MCF 10A (cell line): ENCODE measurements at regions of chr9 and their contacts with region 1.

Region 1: GRCh38 chr9:107732781-107733522 is 243.4 kb upstream of the KLF4 start:
- DNase-seq: peak; percentile 90
- H3K4me3 Mint-ChIP-seq: peak overlapping the region; percentile 65
- H3K27ac Mint-ChIP-seq: peak overlapping the region; percentile 88
- H3K4me1 Mint-ChIP-seq: peaks cover 58% of the 10 kb centered on the region
- H3K27me3 Mint-ChIP-seq: no peaks in the 10 kb centered on the region
- CTCF ChIP-seq: no peak

Region 2: DNA sequence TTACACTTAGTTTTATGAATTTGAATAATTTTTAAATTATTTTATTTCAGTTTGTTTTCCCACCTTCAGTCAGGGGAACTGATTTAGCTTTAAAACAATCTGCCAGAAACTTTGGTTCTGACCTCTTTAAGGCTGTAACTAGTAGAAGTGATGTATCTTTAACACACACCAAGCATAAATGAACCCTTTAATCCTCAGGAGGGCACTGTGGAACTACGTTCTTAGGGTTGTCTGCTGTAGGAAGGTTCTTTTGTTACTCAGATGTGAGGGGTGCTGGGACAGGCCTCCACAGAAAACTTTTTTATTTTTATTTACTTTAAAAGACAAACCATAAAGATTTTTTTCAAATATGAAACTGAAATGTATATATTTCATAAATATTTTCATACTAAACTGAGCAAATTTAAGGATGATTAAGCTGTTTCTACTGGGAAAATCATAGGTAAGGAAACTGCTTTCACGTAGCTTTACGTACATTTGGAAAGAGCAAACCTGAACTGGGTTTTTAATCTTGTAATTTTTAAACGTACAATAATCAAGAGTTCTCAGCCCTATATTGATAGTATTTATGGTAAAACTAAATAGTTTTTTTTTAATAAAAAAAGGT is 248.7 kb before region 1 on chr9:
- CTCF ChIA-PET with region 1: interaction called, 7 read pairs
- POLR2A ChIA-PET with region 1: interaction called, 49 read pairs
- intact Hi-C with region 1: loop called (anchors 1 kb)
- DNase-seq: peak; percentile 81
- H3K4me3 Mint-ChIP-seq: no peak overlapping the region
- H3K27ac Mint-ChIP-seq: no peak overlapping the region
- H3K4me1 Mint-ChIP-seq: peaks cover 31% of the 10 kb centered on the region
- H3K27me3 Mint-ChIP-seq: no peaks in the 10 kb centered on the region
- CTCF ChIP-seq: peak; percentile 55

Region 3: GRCh38 chr9:107711540-107711939 is 21.4 kb before region 1 on chr9:
- CTCF ChIA-PET with region 1: interaction called, 12 read pairs
- POLR2A ChIA-PET with region 1: interaction called, 34 read pairs
- intact Hi-C with region 1: loop called (anchors 2 kb)
- DNase-seq: peak; percentile 98
- H3K4me3 Mint-ChIP-seq: no peak overlapping the region
- H3K27ac Mint-ChIP-seq: peak overlapping the region; percentile 86
- H3K4me1 Mint-ChIP-seq: peaks cover 43% of the 10 kb centered on the region
- H3K27me3 Mint-ChIP-seq: no peaks in the 10 kb centered on the region
- CTCF ChIP-seq: no peak

Region 4: GRCh38 chr9:107749787-107750444 is 17.0 kb after region 1 on chr9:
- CTCF ChIA-PET with region 1: interaction called, 12 read pairs
- POLR2A ChIA-PET with region 1: interaction called, 77 read pairs
- intact Hi-C with region 1: loop called (anchors 1 kb)
- DNase-seq: peak; percentile 98
- H3K4me3 Mint-ChIP-seq: no peak overlapping the region
- H3K27ac Mint-ChIP-seq: peak overlapping the region; percentile 43
- H3K4me1 Mint-ChIP-seq: peaks cover 38% of the 10 kb centered on the region
- H3K27me3 Mint-ChIP-seq: no peaks in the 10 kb centered on the region
- CTCF ChIP-seq: no peak

Region 5: GRCh38 chr9:107949058-107949457 is 216.1 kb after region 1 on chr9:
- CTCF ChIA-PET with region 1: no interaction called
- POLR2A ChIA-PET with region 1: no interaction called
- intact Hi-C with region 1: no loop called
- DNase-seq: peak; percentile 33
- H3K4me3 Mint-ChIP-seq: no peak overlapping the region
- H3K27ac Mint-ChIP-seq: no peak overlapping the region
- H3K4me1 Mint-ChIP-seq: no peaks in the 10 kb centered on the region
- H3K27me3 Mint-ChIP-seq: no peaks in the 10 kb centered on the region
- CTCF ChIP-seq: no peak

Region 6: GRCh38 chr9:108041551-108041950 is 308.6 kb after region 1 on chr9:
- CTCF ChIA-PET with region 1: interaction called, 8 read pairs
- POLR2A ChIA-PET with region 1: interaction called, 19 read pairs
- intact Hi-C with region 1: loop called (anchors 2 kb)
- DNase-seq: peak; percentile 89
- H3K4me3 Mint-ChIP-seq: peak overlapping the region; percentile 54
- H3K27ac Mint-ChIP-seq: peak overlapping the region; percentile 89
- H3K4me1 Mint-ChIP-seq: peaks cover 50% of the 10 kb centered on the region
- H3K27me3 Mint-ChIP-seq: no peaks in the 10 kb centered on the region
- CTCF ChIP-seq: no peak

Region 7: GRCh38 chr9:108478431-108478837 is 745.5 kb after region 1 on chr9:
- CTCF ChIA-PET with region 1: interaction called, 3 read pairs
- POLR2A ChIA-PET with region 1: interaction called, 11 read pairs
- intact Hi-C with region 1: loop called (anchors 10 kb)
- DNase-seq: peak; percentile 97
- H3K4me3 Mint-ChIP-seq: peak overlapping the region; percentile 37
- H3K27ac Mint-ChIP-seq: peak overlapping the region; percentile 89
- H3K4me1 Mint-ChIP-seq: peaks cover 47% of the 10 kb centered on the region
- H3K27me3 Mint-ChIP-seq: no peaks in the 10 kb centered on the region
- CTCF ChIP-seq: no peak